ENCODE measurements at regions of chr1 and their contacts with region 1.

Region 1: DNA sequence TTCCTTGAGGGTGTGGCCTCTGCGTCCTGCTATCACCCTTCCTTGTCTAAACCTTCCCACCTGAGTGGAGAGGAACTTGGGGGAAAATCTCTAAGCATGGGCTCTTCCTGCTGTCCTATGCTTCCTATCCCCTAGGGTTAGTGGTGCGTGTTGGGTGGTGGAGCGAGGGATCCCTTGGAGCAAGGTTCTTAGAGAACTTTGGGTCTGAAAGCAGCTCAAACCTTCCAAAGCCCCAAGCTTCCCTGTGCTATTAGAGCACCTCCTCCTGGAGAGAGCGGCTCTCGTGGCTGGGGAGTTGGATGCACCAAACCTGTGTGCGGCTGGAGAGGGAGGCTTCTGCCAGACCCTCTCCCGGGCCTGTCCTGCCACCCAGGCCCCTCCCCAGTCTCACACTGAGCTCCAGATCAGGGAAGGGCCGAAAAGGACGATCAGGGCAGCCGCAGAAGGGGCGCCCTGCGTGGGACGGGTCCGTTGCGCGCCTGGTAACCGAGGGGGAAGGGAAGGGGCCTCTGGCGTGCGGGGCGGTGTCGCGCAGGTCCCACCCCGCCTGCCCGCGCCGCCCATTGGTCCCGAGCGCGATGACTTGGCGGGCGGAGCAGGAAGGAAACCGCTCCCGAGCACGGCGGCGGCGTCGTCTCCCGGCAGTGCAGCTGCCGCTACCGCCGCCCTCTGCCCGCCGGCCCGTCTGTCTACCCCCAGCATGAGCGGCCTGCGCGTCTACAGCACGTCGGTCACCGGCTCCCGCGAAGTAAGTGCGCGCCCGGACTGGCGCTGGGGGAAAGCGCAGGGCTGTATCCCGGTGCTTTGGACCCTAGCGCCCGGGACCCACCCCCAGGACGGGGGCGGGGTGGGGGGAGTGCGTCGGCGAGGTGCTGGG is at the start of gene SH3BGRL3:
- DNase-seq: peak; percentile 64 to 92 (median 85)
- ATAC-seq: peak; percentile 57
- H3K4me3 ChIP-seq: peak within 1 kb of the TSS; percentile 74 to 93
- H3K4me3 Mint-ChIP-seq: peak within 1 kb of the TSS; percentile 89
- H3K27ac ChIP-seq: peak within 1 kb of the TSS; percentile 69 to 90
- H3K27ac Mint-ChIP-seq: peak within 1 kb of the TSS; percentile 100
- H3K4me1 ChIP-seq: peaks cover 86% of the 10 kb centered on the region
- H3K4me1 Mint-ChIP-seq: peaks cover 86% of the 10 kb centered on the region
- H3K27me3 ChIP-seq: no peaks in the 10 kb centered on the region
- H3K27me3 Mint-ChIP-seq: no peaks in the 10 kb centered on the region
- CTCF ChIP-seq: no peak
- total RNA-seq, gene SH3BGRL3: 187 to 191 TPM

Region 2: GRCh38 chr1:26265405-26265804 is 14.3 kb before region 1 on chr1:
- CTCF ChIA-PET with region 1: interaction called, 12 read pairs
- POLR2A ChIA-PET with region 1: interaction called, 3 read pairs
- intact Hi-C with region 1: no loop called
- DNase-seq: no peak
- ATAC-seq: no peak
- H3K4me3 ChIP-seq: no peak overlapping the region
- H3K4me3 Mint-ChIP-seq: no peak overlapping the region
- H3K27ac ChIP-seq: no peak overlapping the region
- H3K27ac Mint-ChIP-seq: no peak overlapping the region
- H3K4me1 ChIP-seq: no peaks in the 10 kb centered on the region
- H3K4me1 Mint-ChIP-seq: no peaks in the 10 kb centered on the region
- H3K27me3 ChIP-seq: no peaks in the 10 kb centered on the region
- H3K27me3 Mint-ChIP-seq: no peaks in the 10 kb centered on the region
- CTCF ChIP-seq: no peak

Region 3: DNA sequence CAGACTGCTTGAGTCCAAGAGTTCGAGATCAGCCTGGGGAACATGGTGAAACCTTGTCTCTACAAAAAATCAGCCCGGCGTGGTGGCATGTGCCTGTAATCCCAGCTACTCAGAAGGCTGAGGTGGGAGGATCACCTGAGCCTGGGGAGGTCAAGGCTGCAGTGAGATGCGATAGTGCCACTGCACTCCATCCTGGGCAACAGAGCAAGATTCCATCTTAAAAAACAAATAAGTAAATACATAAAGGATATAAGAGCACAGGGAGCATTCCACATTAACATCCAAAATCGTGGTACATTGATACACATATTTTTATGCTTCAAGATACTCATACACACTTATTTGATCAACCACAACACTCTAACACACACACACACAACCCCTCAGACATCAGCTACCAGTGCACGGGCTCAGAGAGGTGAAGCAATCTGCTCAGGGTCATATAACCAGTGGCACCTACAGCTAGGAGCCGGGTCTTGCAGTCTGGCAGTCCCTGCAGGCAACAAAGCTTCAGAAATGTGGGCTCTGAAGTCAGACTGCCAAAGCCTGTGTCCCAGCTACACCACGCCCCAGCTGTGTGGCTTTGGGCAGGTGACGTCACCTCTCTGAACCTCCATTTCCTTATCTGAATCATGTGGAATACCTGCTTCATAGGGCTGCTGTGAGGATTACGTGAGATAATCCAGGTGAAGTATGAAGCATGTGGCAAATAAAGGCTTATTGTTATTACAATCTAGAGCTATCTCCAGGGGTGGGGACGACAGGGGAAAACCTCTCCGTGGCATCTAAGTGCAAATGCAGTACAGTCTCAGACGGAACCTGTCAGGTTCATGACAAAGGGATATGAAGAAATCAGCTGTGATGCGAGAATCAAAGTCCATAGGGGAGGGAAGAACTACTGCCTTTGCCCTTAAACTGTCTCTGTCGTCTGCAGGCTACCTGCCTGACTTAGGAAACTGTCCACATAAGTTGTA is 79.0 kb after region 1 on chr1:
- CTCF ChIA-PET with region 1: interaction called, 106 read pairs
- POLR2A ChIA-PET with region 1: interaction called, 5 read pairs
- intact Hi-C with region 1: loop called (anchors 2 kb)
- DNase-seq: peak; percentile 52 to 90 (median 72)
- ATAC-seq: peak; percentile 81
- H3K4me3 ChIP-seq: no peak overlapping the region
- H3K4me3 Mint-ChIP-seq: peak overlapping the region; percentile 42
- H3K27ac ChIP-seq: no peak overlapping the region
- H3K27ac Mint-ChIP-seq: peak overlapping the region; percentile 84
- H3K4me1 ChIP-seq: peaks cover 36% of the 10 kb centered on the region
- H3K4me1 Mint-ChIP-seq: peaks cover 40% of the 10 kb centered on the region
- H3K27me3 ChIP-seq: peaks cover 0 to 18% of the 10 kb centered on the region in 2 experiments
- H3K27me3 Mint-ChIP-seq: peaks cover 13% of the 10 kb centered on the region
- CTCF ChIP-seq: no peak

Region 4: DNA sequence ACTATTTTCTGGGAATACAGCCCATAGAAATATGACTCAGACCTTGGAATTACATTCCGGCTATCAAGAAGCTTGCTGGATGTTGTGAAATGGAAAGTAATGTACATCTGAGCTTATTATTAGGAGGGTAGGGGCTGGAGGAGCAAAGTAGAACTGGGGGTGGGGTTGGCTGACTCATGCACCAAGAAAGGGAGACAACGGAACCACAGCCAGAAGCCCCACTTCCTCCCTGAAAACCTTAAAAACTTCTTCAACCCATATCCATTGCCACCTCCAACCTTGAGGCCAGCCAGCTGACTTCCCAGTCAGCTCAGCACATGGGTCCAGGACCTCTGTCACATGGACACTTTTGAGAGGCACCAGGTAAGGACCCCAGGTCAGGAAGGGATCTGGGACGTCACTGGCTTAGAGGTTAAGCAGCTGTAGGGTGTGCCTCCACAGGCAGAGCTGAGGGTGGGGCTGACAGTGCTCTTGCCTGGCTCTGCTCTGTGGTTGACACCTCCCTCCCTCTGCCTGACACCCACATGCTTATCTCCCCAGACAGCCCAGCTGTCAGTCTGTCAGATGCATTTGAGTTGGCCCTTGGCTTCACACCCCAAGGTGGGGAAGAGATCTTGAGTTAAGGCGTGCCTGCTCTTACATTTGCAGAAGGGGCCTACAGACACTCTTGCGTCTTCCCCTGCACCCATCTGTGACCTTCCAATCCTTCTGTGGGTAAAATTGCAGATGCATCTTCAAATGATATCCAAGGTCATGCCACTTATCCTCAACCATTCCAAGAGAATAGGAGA is 98.6 kb after region 1 on chr1:
- CTCF ChIA-PET with region 1: interaction called, 26 read pairs
- POLR2A ChIA-PET with region 1: interaction called, 19 read pairs
- intact Hi-C with region 1: no loop called
- DNase-seq: peak; percentile 63 to 96 (median 85)
- ATAC-seq: peak; percentile 91
- H3K4me3 ChIP-seq: peak overlapping the region; percentile 7 to 19
- H3K4me3 Mint-ChIP-seq: peak overlapping the region; percentile 59
- H3K27ac ChIP-seq: peak overlapping the region; percentile 54 to 76
- H3K27ac Mint-ChIP-seq: peak overlapping the region; percentile 91
- H3K4me1 ChIP-seq: peaks cover 65% of the 10 kb centered on the region
- H3K4me1 Mint-ChIP-seq: peaks cover 68% of the 10 kb centered on the region
- H3K27me3 ChIP-seq: no peaks in the 10 kb centered on the region
- H3K27me3 Mint-ChIP-seq: no peaks in the 10 kb centered on the region
- CTCF ChIP-seq: no peak

Region 5: GRCh38 chr1:26399034-26399433 is 119.3 kb after region 1 on chr1:
- CTCF ChIA-PET with region 1: interaction called, 36 read pairs
- POLR2A ChIA-PET with region 1: no interaction called
- intact Hi-C with region 1: no loop called
- DNase-seq: no peak
- ATAC-seq: no peak
- H3K4me3 ChIP-seq: no peak overlapping the region
- H3K4me3 Mint-ChIP-seq: no peak overlapping the region
- H3K27ac ChIP-seq: no peak overlapping the region
- H3K27ac Mint-ChIP-seq: no peak overlapping the region
- H3K4me1 ChIP-seq: no peaks in the 10 kb centered on the region
- H3K4me1 Mint-ChIP-seq: peaks cover 3% of the 10 kb centered on the region
- H3K27me3 ChIP-seq: peaks cover 0 to 2% of the 10 kb centered on the region in 2 experiments
- H3K27me3 Mint-ChIP-seq: peaks cover 11% of the 10 kb centered on the region
- CTCF ChIP-seq: no peak